ENCODE measurements at regions of chr2 and their contacts with region 1.

Region 1: DNA sequence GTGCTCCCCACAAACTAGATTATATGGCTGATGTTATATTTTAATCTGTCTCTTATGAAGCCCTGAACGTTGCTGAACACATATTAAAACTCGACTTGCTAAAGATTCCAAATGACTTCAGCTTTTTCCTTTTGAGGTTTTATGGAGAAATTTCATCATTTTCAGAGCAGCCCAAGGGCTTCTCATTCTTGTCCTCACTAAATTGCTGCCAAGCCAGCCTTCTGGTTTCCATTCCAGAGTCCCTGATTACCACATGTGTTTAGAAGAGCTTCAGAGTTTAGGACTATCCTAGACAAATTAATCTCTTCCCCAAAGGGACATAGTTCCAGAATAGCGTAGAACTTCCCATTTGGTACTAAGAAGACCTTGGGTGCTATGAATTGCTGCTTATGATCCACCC is 77.8 kb upstream of the CCDC195 start:
- DNase-seq: no peak
- H3K4me3 ChIP-seq: no peak overlapping the region
- CTCF ChIP-seq: no peak

Region 2: DNA sequence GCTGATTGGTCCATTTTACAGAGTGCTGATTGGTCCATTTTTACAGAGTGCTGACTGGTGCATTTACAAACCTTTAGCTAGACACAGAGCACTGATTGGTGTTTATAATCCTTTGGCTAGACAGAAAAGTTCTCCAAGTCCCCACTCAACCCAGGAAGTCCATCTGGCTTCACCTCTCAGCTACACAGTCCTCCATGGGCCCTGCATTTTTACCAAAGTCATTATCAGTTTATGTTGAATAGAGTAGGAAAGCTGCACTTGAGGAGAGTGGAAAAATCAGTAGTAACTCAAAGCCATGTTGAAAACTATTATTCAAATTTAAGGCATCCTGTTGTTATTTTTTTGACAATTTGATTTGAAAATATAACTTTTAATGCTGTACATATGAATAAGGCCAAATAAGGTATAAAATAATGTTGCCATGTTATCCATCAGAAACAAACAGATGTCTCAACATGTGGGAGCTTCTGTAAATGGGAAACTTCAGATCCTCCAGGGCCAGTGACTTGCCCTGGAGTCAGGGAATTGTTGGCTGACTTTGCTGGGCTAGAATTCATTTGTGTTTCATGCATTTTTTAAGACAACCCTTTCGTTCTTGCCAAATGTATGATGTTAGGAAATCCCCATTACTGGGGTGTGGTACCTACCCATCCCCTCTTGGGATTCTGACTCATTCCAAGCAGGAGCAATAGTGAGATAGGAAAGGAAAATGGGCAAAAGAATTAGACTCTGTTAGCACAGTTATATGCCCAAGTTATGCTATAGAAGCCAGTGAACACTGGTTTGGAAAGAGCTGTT is 40.0 kb before region 1 on chr2:
- in situ Hi-C with region 1: no loop called
- DNase-seq: no peak
- H3K4me3 ChIP-seq: no peak overlapping the region
- CTCF ChIP-seq: no peak

Region 3: GRCh38 chr2:224869601-224870233 is 75.8 kb after region 1 on chr2:
- in situ Hi-C with region 1: loop called (anchors 5 kb)
- DNase-seq: peak; percentile 85
- H3K4me3 ChIP-seq: no peak overlapping the region
- CTCF ChIP-seq: no peak